ENCODE measurements at regions of chr13 and their contacts with region 1.

Region 1: GRCh38 chr13:51632591-51633362 is 48.5 kb downstream of the WDFY2 start:
- DNase-seq: no peak
- H3K4me3 Mint-ChIP-seq: no peak overlapping the region
- H3K27ac Mint-ChIP-seq: no peak overlapping the region
- H3K4me1 Mint-ChIP-seq: peaks cover 24% of the 10 kb centered on the region
- H3K27me3 Mint-ChIP-seq: no peaks in the 10 kb centered on the region

Region 2: GRCh38 chr13:51645154-51645650 is 12.4 kb after region 1 on chr13:
- intact Hi-C with region 1: loop called (anchors 2 kb)
- DNase-seq: peak; percentile 71
- H3K4me3 Mint-ChIP-seq: peak overlapping the region; percentile 24
- H3K27ac Mint-ChIP-seq: peak overlapping the region; percentile 75
- H3K4me1 Mint-ChIP-seq: peaks cover 28% of the 10 kb centered on the region
- H3K27me3 Mint-ChIP-seq: no peaks in the 10 kb centered on the region

Region 3: DNA sequence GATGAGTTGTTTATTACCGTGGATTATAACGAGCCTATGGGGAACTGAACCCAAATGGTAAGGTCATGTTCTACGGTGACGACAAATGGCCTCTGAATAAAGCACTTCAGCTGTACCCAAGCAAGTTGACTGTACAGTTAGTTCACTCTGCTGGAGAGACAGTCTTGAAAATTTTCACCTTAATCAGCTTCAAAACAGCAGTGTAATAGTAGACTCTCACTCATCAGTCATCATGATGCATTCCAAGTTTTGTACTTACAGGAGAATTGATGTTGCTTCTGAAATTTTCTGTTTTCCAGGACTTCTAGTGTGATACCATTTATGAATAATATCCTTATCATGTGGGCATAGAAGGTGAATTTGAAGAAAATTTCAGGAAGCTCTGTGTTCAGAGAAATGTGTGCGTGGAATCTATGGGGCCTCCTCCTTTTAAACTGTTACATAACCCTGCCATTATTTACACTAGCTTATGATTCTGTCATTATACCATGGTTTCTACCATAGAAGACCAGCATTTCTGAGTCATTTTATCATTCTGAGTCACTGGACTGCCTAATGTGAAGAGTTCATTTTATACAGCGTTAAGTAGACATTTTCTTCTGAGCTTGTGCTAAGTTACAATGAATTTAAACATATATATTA is 48.4 kb after region 1 on chr13:
- intact Hi-C with region 1: loop called (anchors 5 kb)
- DNase-seq: no peak
- H3K4me3 Mint-ChIP-seq: no peak overlapping the region
- H3K27ac Mint-ChIP-seq: no peak overlapping the region
- H3K4me1 Mint-ChIP-seq: peaks cover 7% of the 10 kb centered on the region
- H3K27me3 Mint-ChIP-seq: no peaks in the 10 kb centered on the region